ENCODE measurements at regions of chr11 and their contacts with region 1.

Region 1: GRCh38 chr11:35066783-35067423 is 72.1 kb upstream of the CD44 start:
- DNase-seq: peak in 2 of 5 donors; percentile 61 to 65
- H3K4me3 ChIP-seq: no peak overlapping the region
- H3K4me3 Mint-ChIP-seq: peak overlapping the region; percentile 2 to 84 (median 71)
- H3K27ac ChIP-seq: no peak overlapping the region
- H3K27ac Mint-ChIP-seq: peak overlapping the region; percentile 69 to 96 (median 91)
- H3K4me1 ChIP-seq: peaks cover 31% of the 10 kb centered on the region
- H3K4me1 Mint-ChIP-seq: peaks cover 33 to 50% (median 50%) of the 10 kb centered on the region in 3 donors
- H3K27me3 ChIP-seq: no peaks in the 10 kb centered on the region
- H3K27me3 Mint-ChIP-seq: no peaks in the 10 kb centered on the region

Region 2: DNA sequence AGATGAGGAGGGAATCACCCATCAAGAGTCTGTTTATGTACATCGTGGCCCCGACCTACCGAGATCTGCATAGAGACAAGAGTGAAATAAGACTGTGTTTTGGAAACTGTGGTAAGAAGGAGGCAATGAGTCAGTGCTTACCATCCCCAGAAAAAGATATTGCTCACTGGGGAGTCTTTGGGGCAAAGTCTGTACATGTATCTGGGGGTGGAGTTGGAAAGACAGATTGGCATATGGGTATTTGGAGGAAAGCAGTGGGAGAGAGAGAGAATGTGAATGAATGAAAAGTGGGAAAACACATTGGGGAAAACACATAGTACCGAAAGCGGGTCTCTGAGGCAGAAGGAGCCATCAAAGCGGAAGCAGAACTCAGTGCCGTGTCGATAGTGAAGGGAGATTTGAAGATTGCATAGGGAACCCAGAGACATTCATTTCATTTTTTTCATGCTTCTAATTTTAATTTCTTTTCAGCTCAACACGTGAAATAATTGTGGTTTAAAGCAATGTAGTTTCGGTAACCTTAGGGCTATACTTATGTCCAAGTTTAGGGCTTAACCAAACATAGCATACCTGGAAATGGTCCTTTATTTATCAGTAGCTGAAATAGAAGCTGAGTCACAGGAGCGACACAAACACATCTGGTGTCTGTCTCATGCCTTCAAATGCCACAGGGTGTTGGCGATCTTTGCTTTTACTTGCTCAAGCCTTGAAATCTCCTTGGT is 26.5 kb before region 1 on chr11:
- CTCF ChIA-PET with region 1: interaction called, 4 read pairs
- POLR2A ChIA-PET with region 1: interaction called, 10 read pairs
- DNase-seq: peak; percentile 38 to 87 (median 52)
- H3K4me3 ChIP-seq: peak overlapping the region; percentile 59
- H3K4me3 Mint-ChIP-seq: peak overlapping the region; percentile 81 to 91 (median 88)
- H3K27ac ChIP-seq: peak overlapping the region; percentile 73
- H3K27ac Mint-ChIP-seq: peak overlapping the region; percentile 89 to 100 (median 98)
- H3K4me1 ChIP-seq: peaks cover 55% of the 10 kb centered on the region
- H3K4me1 Mint-ChIP-seq: peaks cover 33 to 70% (median 58%) of the 10 kb centered on the region in 3 donors
- H3K27me3 ChIP-seq: no peaks in the 10 kb centered on the region
- H3K27me3 Mint-ChIP-seq: peaks cover 0 to 5% of the 10 kb centered on the region in 2 donors

Measured in CD8-positive, alpha-beta memory T cell (primary cell).